Ovary (tissue), 10 donors: ENCODE measurements at regions of chr4 and their contacts with region 1.

Region 1: GRCh38 chr4:140523857-140524742 is at the start of gene ELMOD2:
- DNase-seq: peak; percentile 97 to 99 (median 98)
- H3K4me3 ChIP-seq: peak within 1 kb of the TSS; percentile 83
- H3K27ac ChIP-seq: peak within 1 kb of the TSS in 1 of 2 donors; percentile 76
- H3K4me1 ChIP-seq: peaks cover 3% of the 10 kb centered on the region
- H3K27me3 ChIP-seq: no peaks in the 10 kb centered on the region
- CTCF ChIP-seq: peak; percentile 91 to 97 (median 92)
- EP300 ChIP-seq: no peak
- POLR2A ChIP-seq: no peak
- total RNA-seq, gene ELMOD2: 13.6 to 22.3 (median 15.9) TPM

Region 2: GRCh38 chr4:139740531-139741041 is 783.5 kb before region 1 on chr4:
- intact Hi-C with region 1: loop called in 1 of 4 experiments (anchors 5 kb)
- DNase-seq: peak; percentile 61 to 81 (median 71)
- H3K4me3 ChIP-seq: no peak overlapping the region
- H3K27ac ChIP-seq: peak overlapping the region; percentile 23 to 85
- H3K4me1 ChIP-seq: peaks cover 12% of the 10 kb centered on the region
- H3K27me3 ChIP-seq: no peaks in the 10 kb centered on the region
- CTCF ChIP-seq: peak in 2 of 3 donors; percentile 27 to 46
- EP300 ChIP-seq: no peak
- POLR2A ChIP-seq: peak; percentile 45